GM12878 (cell line): ENCODE measurements at regions of chr12 and their contacts with region 1.

Region 1: DNA sequence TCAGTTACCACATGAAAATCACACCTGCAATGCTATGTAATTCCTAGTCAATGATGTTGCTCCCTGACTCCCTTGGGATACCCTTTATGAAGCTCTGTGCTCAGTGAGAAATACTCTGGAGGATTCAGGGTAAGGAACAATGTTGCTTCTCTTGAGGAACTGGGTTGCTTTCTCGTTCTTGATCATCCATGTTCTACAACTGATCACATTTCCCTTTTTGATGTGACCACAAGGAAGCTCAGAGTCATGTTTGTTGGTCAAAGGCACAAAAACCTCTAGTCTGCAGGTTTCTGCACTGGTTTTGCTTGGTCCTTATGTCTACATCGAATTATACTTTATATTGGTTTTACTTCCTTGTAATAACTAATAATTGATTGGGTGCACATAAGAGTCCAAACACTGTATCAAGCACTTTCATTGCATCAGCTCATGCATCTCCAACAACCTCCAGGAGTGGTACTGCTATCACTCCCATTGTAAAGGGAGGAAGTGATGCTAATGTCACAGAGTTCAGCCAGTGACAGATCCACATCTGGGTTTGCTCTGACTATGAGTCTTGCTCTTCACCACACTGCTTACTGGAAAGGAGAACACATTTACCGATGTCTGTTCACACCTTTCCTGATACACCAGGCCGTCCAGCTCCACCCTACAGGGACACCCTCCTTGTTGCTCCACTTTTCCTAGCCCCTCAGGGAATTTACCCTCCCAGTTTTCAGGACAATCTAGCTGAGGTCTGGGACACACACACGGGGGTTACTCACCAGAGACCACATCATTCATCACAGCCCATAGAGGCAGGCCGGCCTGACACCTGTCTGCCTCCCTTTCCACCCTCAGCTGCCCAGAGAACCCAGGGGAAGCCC is 41.0 kb downstream of the CMKLR1 start:
- DNase-seq: peak; percentile 76
- ATAC-seq: peak; percentile 91
- H3K4me3 ChIP-seq: 0 out of 2 replicates have a peak overlapping the region, but pooled peaks have one; percentile 11
- H3K27ac ChIP-seq: peak overlapping the region; percentile 71
- H3K4me1 ChIP-seq: peaks cover 55% of the 10 kb centered on the region
- H3K27me3 ChIP-seq: no peaks in the 10 kb centered on the region
- CTCF ChIP-seq: no peak
- EP300 ChIP-seq: no peak
- POLR2A ChIP-seq: no peak
- RAD21 ChIP-seq: no peak

Region 2: GRCh38 chr12:108313606-108314351 is 15.7 kb after region 1 on chr12:
- CTCF ChIA-PET with region 1: interaction called, 11 read pairs
- POLR2A ChIA-PET with region 1: interaction called, 16 read pairs
- RAD21 ChIA-PET with region 1: interaction called, 6 read pairs
- SMC1A ChIA-PET with region 1: interaction called, 19 read pairs
- in situ Hi-C with region 1: no loop called
- intact Hi-C with region 1: no loop called
- DNase-seq: no peak
- ATAC-seq: peak; percentile 56
- H3K4me3 ChIP-seq: peak overlapping the region; percentile 9; the same call in 1 of the 2 replicates
- H3K27ac ChIP-seq: peak overlapping the region; percentile 71
- H3K4me1 ChIP-seq: peaks cover 80% of the 10 kb centered on the region
- H3K27me3 ChIP-seq: no peaks in the 10 kb centered on the region
- CTCF ChIP-seq: no peak
- EP300 ChIP-seq: no peak
- POLR2A ChIP-seq: no peak
- RAD21 ChIP-seq: no peak

Region 3: DNA sequence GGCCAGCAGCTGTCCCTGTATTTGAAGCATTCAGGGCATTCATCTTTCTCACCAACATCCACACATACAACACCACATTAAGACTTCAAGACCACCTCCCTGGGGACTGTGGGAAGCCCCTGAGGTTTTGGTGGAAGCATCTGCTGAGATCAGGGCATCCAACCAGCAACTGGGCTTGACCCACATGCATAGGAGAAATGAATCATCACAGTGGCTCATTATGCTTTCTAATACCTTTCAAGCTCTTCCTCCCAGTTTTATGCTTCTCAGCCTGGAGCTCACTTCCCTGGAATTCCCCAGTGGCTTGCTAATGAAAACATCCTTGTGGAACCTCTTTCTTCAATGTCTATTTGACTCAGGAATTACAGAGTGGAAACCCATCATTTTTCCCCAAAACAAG is 62.4 kb after region 1 on chr12:
- CTCF ChIA-PET with region 1: no interaction called
- POLR2A ChIA-PET with region 1: no interaction called
- RAD21 ChIA-PET with region 1: interaction called, 3 read pairs
- SMC1A ChIA-PET with region 1: interaction called, 10 read pairs
- in situ Hi-C with region 1: no loop called
- intact Hi-C with region 1: no loop called
- DNase-seq: peak; percentile 84
- ATAC-seq: peak; percentile 86
- H3K4me3 ChIP-seq: no peak overlapping the region; the same call in 1 of the 2 replicates
- H3K27ac ChIP-seq: peak overlapping the region; percentile 57
- H3K4me1 ChIP-seq: peaks cover 30% of the 10 kb centered on the region
- H3K27me3 ChIP-seq: no peaks in the 10 kb centered on the region
- CTCF ChIP-seq: no peak
- EP300 ChIP-seq: peak; percentile 54 to 73; a peak in 3 of 4 replicates
- POLR2A ChIP-seq: no peak
- RAD21 ChIP-seq: 0 out of 2 replicates have a peak, but pooled peaks have one; percentile 21

Region 4: DNA sequence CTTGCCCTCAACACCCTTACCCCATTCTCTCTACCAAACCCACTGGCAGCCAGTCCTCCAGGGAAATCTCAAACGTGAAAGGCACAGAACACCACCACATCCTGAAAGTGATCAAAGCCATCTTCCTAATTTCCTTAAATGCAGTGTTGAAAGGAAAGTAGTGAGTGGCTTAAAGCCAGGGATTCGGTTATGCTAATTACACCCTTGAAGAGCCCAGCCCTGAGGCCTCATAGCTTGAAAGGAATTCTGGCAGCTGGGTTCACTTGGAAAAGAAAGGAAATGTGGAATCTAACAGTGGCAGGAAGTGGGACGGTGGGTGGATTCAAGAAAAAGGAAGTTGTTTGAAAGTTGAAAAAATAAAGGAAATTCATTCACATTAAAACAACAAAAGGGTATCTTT is 143.9 kb after region 1 on chr12:
- CTCF ChIA-PET with region 1: no interaction called
- POLR2A ChIA-PET with region 1: no interaction called
- RAD21 ChIA-PET with region 1: no interaction called
- SMC1A ChIA-PET with region 1: no interaction called
- in situ Hi-C with region 1: no loop called
- intact Hi-C with region 1: no loop called
- DNase-seq: no peak
- ATAC-seq: no peak
- H3K4me3 ChIP-seq: no peak overlapping the region
- H3K27ac ChIP-seq: no peak overlapping the region
- H3K4me1 ChIP-seq: no peaks in the 10 kb centered on the region
- H3K27me3 ChIP-seq: no peaks in the 10 kb centered on the region; a peak in 1 of 4 replicates
- CTCF ChIP-seq: no peak
- EP300 ChIP-seq: no peak
- POLR2A ChIP-seq: no peak
- RAD21 ChIP-seq: no peak

Region 5: GRCh38 chr12:108551535-108551934 is 253.4 kb after region 1 on chr12:
- CTCF ChIA-PET with region 1: no interaction called
- POLR2A ChIA-PET with region 1: no interaction called
- RAD21 ChIA-PET with region 1: no interaction called
- SMC1A ChIA-PET with region 1: no interaction called
- in situ Hi-C with region 1: no loop called
- intact Hi-C with region 1: no loop called
- DNase-seq: no peak
- ATAC-seq: peak; percentile 21; the same call in 2 of the 3 replicates
- H3K4me3 ChIP-seq: peak overlapping the region; percentile 59
- H3K27ac ChIP-seq: peak overlapping the region; percentile 17; the same call in 1 of the 2 replicates
- H3K4me1 ChIP-seq: peaks cover 25% of the 10 kb centered on the region
- H3K27me3 ChIP-seq: no peaks in the 10 kb centered on the region
- CTCF ChIP-seq: no peak
- EP300 ChIP-seq: no peak
- POLR2A ChIP-seq: no peak
- RAD21 ChIP-seq: no peak